Head of caudate nucleus (tissue), 42 donors: ENCODE measurements at regions of chr14 and their contacts with region 1.

Region 1: DNA sequence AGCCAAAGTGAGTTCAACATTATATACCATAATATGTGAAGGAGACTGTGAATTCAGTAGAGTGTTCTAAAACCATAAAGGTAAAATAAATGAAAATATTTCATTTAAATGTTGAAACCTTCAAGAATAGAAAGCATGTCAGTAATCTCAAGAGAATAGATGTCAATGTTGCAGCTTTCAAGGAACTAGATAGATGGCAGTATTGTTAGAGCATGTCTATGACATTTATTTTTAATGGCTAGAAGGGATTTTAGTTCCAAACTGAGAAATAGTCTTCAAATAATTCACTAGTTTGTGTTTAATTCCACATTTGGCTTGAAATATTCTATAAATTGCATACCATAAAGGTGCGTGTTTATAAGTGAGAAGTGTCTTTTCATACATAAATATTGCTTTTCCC is 326.5 kb downstream of the FLRT2 start:
- DNase-seq: no peak

Region 2: GRCh38 chr14:85824526-85824925 is 31.9 kb before region 1 on chr14:
- intact Hi-C with region 1: no loop called
- DNase-seq: no peak

Region 3: DNA sequence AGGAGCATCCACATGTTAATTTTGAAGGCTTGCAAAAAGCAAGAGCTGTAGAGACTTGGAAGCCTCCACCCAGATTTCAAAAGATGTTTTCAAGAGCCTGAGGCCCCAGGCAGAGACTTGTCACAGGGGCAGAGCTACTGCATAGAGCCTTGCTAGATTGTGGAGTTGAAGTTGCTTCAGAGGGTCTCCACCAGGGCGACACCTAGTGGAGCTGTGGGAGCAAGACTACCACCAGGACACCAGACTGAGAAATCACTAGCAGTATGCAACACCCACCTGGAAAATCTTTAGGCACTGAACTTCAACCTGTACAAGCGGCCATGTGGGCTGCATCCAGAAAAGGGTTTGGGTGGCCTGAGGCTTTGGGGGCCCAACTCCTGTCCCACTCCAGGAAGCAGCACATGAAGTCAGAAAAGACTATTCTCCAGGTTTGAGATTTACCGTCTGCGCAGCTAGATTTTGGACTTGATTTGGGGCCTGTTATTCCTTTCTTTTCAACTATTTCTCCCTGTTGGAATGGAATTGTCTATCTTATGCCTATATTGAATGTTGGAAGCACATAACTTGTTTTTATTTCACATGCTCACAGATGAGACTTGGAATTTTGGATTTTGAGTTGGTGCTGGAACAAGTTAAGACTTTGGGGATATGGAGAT is 182.1 kb after region 1 on chr14:
- intact Hi-C with region 1: loop called (anchors 10 kb)
- DNase-seq: peak in 39 of 42 donors; percentile 4 to 73 (median 30)